PC-3 (cell line): ENCODE measurements at regions of chr7 and their contacts with region 1.

Region 1: DNA sequence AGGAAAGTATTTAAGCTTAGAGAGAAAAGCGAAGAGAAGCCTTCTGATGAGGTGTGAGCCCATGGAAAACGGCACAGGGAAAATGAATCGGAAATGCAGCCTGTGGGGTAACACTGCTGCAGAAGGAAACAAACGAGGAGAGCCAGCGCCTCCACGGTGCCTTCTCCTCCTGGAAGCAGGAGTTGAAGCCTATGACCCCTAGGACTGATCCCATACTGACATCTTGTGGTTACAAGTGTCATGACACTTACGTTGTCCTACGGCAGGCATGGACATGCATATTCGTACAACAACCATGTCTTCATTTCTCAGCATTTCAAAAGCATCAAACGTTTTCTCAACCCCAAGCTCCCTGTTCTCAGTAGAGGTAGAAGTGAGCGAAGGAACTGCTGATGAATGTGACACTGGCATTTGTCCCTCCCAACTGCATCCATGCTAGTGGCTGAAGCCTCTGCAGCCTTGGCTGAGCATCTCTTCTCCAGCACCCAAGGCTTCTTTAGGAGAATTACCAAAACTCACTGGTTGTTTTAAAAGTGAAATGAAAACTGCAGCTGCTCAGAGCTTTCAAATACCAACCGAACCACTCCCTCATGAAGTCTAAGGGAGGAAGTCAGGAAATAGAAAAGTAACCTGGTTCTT is 160.2 kb downstream of the JAZF1 start:
- DNase-seq: peak; percentile 82
- ATAC-seq: peak; percentile 93
- H3K4me3 ChIP-seq: no peak overlapping the region; the same call in 1 of the 2 replicates
- H3K27ac ChIP-seq: no peak overlapping the region
- H3K4me1 ChIP-seq: peaks cover 11% of the 10 kb centered on the region
- H3K27me3 ChIP-seq: no peaks in the 10 kb centered on the region
- CTCF ChIP-seq: peak; percentile 89

Region 2: GRCh38 chr7:27689591-27690164 is 330.7 kb before region 1 on chr7:
- CTCF ChIA-PET with region 1: interaction called, 3 read pairs
- POLR2A ChIA-PET with region 1: no interaction called
- intact Hi-C with region 1: loop called (anchors 5 kb)
- DNase-seq: peak; percentile 67
- ATAC-seq: peak; percentile 93
- H3K4me3 ChIP-seq: no peak overlapping the region
- H3K27ac ChIP-seq: no peak overlapping the region
- H3K4me1 ChIP-seq: peaks cover 18% of the 10 kb centered on the region
- H3K27me3 ChIP-seq: no peaks in the 10 kb centered on the region
- CTCF ChIP-seq: peak; percentile 89

Region 3: GRCh38 chr7:27745064-27745583 is 275.3 kb before region 1 on chr7:
- CTCF ChIA-PET with region 1: no interaction called
- POLR2A ChIA-PET with region 1: no interaction called
- intact Hi-C with region 1: loop called (anchors 5 kb)
- DNase-seq: peak; percentile 79
- ATAC-seq: peak; percentile 45
- H3K4me3 ChIP-seq: peak overlapping the region; percentile 41
- H3K27ac ChIP-seq: peak overlapping the region; percentile 32
- H3K4me1 ChIP-seq: peaks cover 35% of the 10 kb centered on the region
- H3K27me3 ChIP-seq: no peaks in the 10 kb centered on the region
- CTCF ChIP-seq: peak; percentile 80

Region 4: GRCh38 chr7:27784393-27785053 is 235.9 kb before region 1 on chr7:
- CTCF ChIA-PET with region 1: no interaction called
- POLR2A ChIA-PET with region 1: no interaction called
- intact Hi-C with region 1: loop called (anchors 1 kb)
- DNase-seq: peak; percentile 96
- ATAC-seq: peak; percentile 97
- H3K4me3 ChIP-seq: no peak overlapping the region
- H3K27ac ChIP-seq: no peak overlapping the region
- H3K4me1 ChIP-seq: peaks cover 24% of the 10 kb centered on the region
- H3K27me3 ChIP-seq: no peaks in the 10 kb centered on the region
- CTCF ChIP-seq: peak; percentile 75

Region 5: DNA sequence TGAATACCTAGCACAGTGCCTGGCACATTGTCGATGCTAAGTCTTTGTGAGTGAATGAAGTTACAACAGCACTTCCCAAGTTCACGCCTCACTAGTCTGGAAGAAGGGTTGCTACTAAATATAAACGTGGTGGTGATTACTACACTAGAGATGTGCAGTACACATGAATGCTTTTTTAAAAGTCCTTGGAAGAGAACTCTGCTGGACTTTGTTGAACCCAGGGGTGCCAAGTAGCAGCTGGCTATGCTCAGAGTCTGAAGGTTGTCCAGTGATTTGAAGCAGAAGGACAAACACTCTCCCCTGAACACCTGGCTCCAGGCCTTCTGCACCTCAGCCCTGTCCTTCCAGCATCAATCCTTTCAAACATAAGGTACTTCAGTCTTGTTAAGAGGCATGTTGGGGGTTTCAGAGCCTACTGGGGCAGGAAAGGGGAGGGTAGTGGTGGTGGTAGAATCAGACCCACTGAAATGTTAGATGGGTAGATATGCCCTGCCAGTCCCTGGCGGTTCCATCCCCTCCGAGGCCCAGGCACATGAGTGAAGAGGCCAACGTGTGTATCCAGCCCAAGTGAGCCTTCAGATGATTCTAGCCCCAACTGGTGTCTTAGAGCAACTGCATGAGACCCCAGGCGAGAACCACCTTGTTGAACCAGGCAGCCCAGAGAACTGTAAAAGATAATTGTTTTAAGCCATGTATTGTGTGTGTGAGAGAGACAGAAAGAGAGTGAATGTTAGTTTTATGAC is 186.1 kb before region 1 on chr7:
- CTCF ChIA-PET with region 1: no interaction called
- POLR2A ChIA-PET with region 1: no interaction called
- intact Hi-C with region 1: no loop called
- DNase-seq: no peak
- ATAC-seq: no peak
- H3K4me3 ChIP-seq: no peak overlapping the region
- H3K27ac ChIP-seq: no peak overlapping the region
- H3K4me1 ChIP-seq: no peaks in the 10 kb centered on the region
- H3K27me3 ChIP-seq: no peaks in the 10 kb centered on the region
- CTCF ChIP-seq: no peak

Region 6: DNA sequence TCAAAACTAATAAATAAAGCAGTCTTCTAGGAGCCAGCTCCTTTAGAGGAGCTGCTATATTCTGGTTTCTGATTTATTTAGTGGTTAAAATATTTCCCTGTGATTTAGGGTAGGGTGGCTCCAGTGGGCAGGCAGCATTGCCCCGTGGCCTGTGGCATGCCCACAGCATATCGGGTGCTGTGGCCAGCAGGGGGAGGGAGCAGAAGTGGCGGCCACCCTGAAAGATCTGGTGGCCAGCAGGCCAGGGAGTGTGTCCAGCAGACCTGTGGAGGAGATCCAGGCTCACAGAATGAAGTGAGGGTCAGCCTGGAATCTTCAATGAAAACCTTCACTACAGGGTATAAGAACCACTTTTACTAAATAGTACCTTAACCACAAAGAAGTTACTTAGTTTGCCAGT is 91.3 kb before region 1 on chr7:
- CTCF ChIA-PET with region 1: interaction called, 3 read pairs
- POLR2A ChIA-PET with region 1: no interaction called
- intact Hi-C with region 1: loop called (anchors 1 kb)
- DNase-seq: no peak
- ATAC-seq: no peak; the same call in 1 of the 2 replicates
- H3K4me3 ChIP-seq: no peak overlapping the region
- H3K27ac ChIP-seq: no peak overlapping the region
- H3K4me1 ChIP-seq: peaks cover 10% of the 10 kb centered on the region
- H3K27me3 ChIP-seq: no peaks in the 10 kb centered on the region
- CTCF ChIP-seq: peak; percentile 28; the same call in 1 of the 2 replicates

Region 7: DNA sequence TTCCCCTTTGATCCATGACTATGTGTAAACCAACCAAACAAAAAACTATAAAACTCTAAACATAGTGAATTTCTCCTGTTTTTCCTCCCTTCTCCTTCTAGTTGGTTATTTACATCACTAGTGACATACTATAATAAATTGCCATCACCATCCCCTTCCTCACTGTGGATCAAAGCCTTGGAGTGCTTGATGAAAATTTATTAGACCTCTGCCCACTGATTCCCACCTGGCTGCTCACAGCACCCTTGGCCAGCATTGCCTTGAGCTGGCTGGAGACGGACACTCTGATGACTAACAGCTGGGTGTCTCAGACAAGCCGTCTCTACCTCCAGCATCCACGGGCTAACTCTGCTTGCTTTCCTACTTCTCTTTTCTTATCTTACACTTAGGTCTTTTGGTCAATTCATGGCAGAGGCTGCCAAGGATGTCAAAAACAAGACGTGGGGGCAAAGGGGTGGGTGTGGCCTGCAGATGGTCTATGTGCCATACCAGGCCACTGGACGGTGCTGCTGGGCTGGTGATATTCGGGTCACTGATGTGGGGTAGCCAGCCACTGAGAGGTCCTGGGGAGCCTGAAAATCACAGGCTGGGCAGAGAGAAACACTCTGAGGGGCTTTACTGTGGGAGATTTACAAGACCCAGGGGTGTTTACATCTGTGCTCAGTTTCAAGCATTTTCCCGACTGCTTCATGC is 72.7 kb before region 1 on chr7:
- CTCF ChIA-PET with region 1: no interaction called
- POLR2A ChIA-PET with region 1: no interaction called
- intact Hi-C with region 1: no loop called
- DNase-seq: no peak
- ATAC-seq: no peak
- H3K4me3 ChIP-seq: no peak overlapping the region
- H3K27ac ChIP-seq: no peak overlapping the region
- H3K4me1 ChIP-seq: no peaks in the 10 kb centered on the region
- H3K27me3 ChIP-seq: no peaks in the 10 kb centered on the region
- CTCF ChIP-seq: no peak

Region 8: DNA sequence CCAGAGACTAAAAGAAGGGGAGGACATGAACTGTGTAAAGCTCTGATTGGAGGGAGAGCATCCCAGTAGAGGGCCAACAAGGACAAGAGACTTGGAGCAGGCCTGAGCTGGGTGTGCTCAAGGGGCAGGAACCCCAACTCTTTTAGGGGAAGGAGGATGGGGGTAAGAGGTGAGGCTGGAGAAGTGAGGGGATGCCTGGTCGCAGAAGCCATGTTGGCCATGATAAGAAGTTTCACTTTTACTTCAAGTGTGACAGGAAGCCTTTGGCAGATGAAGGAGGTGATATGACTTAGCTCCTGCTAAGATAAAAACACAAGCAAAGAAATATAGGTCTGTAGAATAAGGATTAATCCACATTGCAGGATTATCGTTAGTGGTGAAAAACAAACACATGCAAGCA is 48.1 kb before region 1 on chr7:
- CTCF ChIA-PET with region 1: no interaction called
- POLR2A ChIA-PET with region 1: no interaction called
- intact Hi-C with region 1: no loop called
- DNase-seq: no peak
- ATAC-seq: no peak
- H3K4me3 ChIP-seq: no peak overlapping the region
- H3K27ac ChIP-seq: no peak overlapping the region
- H3K4me1 ChIP-seq: no peaks in the 10 kb centered on the region
- H3K27me3 ChIP-seq: no peaks in the 10 kb centered on the region
- CTCF ChIP-seq: no peak

Region 9: GRCh38 chr7:28078036-28078901 is 57.8 kb after region 1 on chr7:
- CTCF ChIA-PET with region 1: no interaction called
- POLR2A ChIA-PET with region 1: no interaction called
- intact Hi-C with region 1: loop called (anchors 1 kb)
- DNase-seq: peak; percentile 65
- ATAC-seq: peak; percentile 51
- H3K4me3 ChIP-seq: no peak overlapping the region
- H3K27ac ChIP-seq: no peak overlapping the region
- H3K4me1 ChIP-seq: no peaks in the 10 kb centered on the region
- H3K27me3 ChIP-seq: no peaks in the 10 kb centered on the region
- CTCF ChIP-seq: peak; percentile 96

Region 10: DNA sequence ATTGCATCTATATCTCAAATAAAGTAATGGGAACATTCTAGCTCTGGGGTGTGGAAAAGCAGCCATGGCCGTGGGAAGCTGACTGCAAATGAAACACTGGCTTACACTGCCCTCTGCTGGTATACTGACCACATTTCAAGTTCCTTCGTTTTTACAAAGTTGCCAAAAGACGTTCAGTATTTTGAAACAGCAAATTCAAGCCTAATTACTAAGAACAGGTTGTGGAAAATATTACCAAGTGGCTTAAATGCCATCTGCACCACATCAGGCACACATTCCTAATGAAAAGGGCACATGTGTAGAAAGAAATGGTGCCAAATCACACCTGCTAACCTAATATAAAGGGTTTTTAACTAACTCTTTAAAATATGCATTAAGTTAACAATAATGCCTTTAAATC is 76.3 kb after region 1 on chr7:
- CTCF ChIA-PET with region 1: interaction called, 3 read pairs
- POLR2A ChIA-PET with region 1: no interaction called
- intact Hi-C with region 1: loop called (anchors 5 kb)
- DNase-seq: peak; percentile 71
- ATAC-seq: peak; percentile 66
- H3K4me3 ChIP-seq: no peak overlapping the region
- H3K27ac ChIP-seq: no peak overlapping the region
- H3K4me1 ChIP-seq: no peaks in the 10 kb centered on the region
- H3K27me3 ChIP-seq: no peaks in the 10 kb centered on the region
- CTCF ChIP-seq: peak; percentile 88